ENCODE measurements at regions of chr14 and their contacts with region 1.

Region 1: DNA sequence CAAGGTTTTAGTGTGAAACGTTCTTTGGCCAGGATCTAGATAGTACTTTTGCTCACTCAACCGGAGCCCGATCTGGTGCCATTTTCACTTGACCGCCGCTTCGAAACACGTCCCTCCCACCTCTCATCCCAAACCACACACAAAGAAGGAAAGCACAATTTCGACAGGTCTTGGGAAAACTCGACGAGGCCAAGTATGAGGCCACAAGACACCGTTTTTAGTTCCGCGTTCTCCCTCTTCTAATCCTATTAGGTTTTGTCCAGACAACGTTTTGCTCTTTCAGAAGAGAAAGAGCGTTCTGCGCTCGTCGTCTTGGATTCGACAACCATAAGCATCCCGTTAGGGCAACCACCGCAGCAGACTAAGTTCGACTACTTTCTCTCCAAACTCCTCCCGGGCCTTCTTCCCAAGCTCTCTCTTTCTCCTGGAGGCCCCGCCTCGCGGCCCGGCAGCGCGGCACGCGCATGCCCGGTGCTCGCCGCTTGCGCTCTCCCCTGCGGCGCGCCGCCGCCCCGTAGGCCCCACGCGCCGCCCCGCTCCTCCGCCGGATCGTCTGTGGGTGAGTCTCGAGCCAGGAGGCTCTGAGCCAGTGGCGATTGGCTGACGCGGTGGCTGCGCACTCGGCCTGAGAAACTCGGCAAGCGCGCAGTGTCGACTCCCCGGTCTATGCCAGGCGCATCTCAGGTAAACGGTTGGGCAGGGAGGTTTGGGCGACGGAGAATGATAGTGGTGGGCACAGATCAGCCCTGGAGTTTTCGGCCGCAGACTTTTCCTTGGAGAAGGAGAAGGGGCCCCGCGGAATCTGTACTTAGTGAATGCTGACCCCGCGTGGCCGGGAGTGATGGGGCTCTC is at the start of gene MIPOL1:
- DNase-seq: peak; percentile 87
- total RNA-seq, gene MIPOL1: 7.9 TPM

Region 2: DNA sequence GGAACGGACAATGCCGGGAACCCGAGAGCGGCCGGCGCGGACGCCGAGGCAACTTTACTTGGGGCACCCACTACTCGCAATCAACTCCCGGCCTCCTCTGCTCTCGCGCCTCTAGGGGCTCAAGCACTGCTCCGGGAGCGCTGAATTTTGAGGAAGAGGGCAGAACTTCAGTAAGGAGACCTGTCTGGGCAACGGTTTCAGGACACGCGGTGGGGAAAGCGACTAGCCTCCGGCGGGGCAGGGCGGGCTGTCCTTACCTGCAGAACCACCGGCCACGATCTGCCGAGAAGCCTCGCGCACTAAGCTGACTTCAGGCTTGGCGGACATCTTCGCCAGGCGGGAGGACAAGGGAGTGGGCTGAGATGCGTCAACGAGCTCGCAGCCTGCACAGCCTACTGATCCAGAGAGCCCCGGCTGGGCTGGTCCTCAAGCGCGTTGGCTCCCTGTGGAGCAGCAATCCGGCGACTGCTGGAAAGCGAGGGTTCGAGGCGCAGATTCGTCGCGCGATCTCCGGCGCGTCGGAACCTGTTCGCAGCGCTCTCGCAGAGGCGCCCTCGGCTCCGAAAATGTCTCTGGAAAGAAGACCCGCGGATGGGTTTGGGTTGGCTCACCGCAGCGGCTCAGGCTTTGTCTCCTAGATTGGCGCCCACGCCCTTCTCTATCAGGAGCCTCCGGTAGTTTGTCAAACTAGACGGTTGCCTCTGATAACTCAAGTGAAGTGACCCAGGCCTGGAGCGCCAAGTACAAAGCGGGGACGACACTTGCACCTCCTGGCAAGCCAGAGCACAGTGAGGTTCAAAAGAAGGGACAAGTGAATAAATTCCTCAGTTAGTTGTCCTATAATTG is 25.4 kb before region 1 on chr14 and contains the start of gene SLC25A21:
- intact Hi-C with region 1: loop called (anchors 1 kb)
- DNase-seq: peak; percentile 85
- total RNA-seq, gene SLC25A21: 0.24 TPM

Measured in cardiac septum (tissue), 1 donor.